IMR-90 (cell line): ENCODE measurements at regions of chr3 and their contacts with region 1.

Region 1: GRCh38 chr3:156509189-156510174 is 45.4 kb downstream of the SSR3 start:
- DNase-seq: peak; percentile 66
- ATAC-seq: peak; percentile 91
- H3K4me3 ChIP-seq: no peak overlapping the region
- H3K27ac ChIP-seq: no peak overlapping the region
- H3K4me1 ChIP-seq: 0 out of 2 replicates have a peak, but pooled peaks cover 2% of the 10 kb centered on the region
- H3K27me3 ChIP-seq: peaks cover 12% of the 10 kb centered on the region
- CTCF ChIP-seq: peak; percentile 67
- POLR2A ChIP-seq: no peak
- RAD21 ChIP-seq: peak; percentile 74

Region 2: GRCh38 chr3:156417559-156418132 is 91.8 kb before region 1 on chr3:
- CTCF ChIA-PET with region 1: interaction called, 11 read pairs
- POLR2A ChIA-PET with region 1: no interaction called
- dilution Hi-C with region 1: no loop called
- in situ Hi-C with region 1: no loop called
- intact Hi-C with region 1: no loop called
- DNase-seq: no peak
- ATAC-seq: no peak
- H3K4me3 ChIP-seq: no peak overlapping the region
- H3K27ac ChIP-seq: no peak overlapping the region
- H3K4me1 ChIP-seq: no peaks in the 10 kb centered on the region
- H3K27me3 ChIP-seq: peaks cover 5% of the 10 kb centered on the region
- CTCF ChIP-seq: no peak
- POLR2A ChIP-seq: no peak
- RAD21 ChIP-seq: no peak

Region 3: DNA sequence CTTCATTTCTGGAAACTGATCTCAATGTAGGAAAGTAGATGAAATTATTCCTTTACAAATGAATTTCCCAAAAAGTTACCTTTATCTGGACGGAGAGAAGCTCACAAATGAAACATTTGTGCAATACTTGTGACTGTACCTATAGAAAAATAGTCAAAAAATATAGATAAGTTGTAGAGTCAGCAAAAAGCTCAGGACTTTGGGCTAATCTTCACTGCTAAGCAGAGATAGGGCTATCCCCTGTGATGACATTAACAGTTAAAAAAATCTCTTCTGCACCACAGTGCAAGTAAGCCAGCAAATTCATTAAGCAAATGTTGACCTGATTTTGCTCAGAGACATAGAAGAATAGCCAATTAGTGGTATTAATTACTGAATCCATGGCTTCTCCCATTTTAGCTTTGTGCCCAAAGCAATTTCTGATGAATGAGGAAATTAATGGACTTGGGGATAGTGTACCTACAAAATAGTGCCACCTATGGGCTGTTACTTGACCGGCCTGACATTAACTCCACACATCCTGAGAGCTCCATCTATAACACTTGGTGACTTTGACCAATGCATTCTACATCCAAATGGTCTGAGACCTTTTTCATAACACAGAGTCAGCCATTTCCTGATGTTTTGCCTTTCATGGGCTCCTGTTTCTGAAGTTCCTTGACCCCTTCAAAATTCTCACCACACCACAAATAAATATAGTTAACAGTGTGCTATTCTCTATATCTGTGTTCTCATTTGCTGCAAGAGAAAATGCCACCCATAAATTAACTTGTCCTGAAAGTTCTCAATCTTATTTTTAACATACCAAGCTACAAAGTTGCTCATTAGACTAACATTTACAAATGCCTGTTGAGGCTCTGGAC is 59.5 kb before region 1 on chr3:
- CTCF ChIA-PET with region 1: interaction called, 12 read pairs
- POLR2A ChIA-PET with region 1: no interaction called
- dilution Hi-C with region 1: no loop called
- in situ Hi-C with region 1: no loop called
- intact Hi-C with region 1: loop called (anchors 1 kb)
- DNase-seq: peak; percentile 30
- ATAC-seq: peak; percentile 74
- H3K4me3 ChIP-seq: no peak overlapping the region
- H3K27ac ChIP-seq: no peak overlapping the region
- H3K4me1 ChIP-seq: no peaks in the 10 kb centered on the region
- H3K27me3 ChIP-seq: peaks cover 6% of the 10 kb centered on the region
- CTCF ChIP-seq: peak; percentile 53
- POLR2A ChIP-seq: no peak
- RAD21 ChIP-seq: peak; percentile 35